ENCODE measurements at regions of chr6 and their contacts with region 1.

Region 1: DNA sequence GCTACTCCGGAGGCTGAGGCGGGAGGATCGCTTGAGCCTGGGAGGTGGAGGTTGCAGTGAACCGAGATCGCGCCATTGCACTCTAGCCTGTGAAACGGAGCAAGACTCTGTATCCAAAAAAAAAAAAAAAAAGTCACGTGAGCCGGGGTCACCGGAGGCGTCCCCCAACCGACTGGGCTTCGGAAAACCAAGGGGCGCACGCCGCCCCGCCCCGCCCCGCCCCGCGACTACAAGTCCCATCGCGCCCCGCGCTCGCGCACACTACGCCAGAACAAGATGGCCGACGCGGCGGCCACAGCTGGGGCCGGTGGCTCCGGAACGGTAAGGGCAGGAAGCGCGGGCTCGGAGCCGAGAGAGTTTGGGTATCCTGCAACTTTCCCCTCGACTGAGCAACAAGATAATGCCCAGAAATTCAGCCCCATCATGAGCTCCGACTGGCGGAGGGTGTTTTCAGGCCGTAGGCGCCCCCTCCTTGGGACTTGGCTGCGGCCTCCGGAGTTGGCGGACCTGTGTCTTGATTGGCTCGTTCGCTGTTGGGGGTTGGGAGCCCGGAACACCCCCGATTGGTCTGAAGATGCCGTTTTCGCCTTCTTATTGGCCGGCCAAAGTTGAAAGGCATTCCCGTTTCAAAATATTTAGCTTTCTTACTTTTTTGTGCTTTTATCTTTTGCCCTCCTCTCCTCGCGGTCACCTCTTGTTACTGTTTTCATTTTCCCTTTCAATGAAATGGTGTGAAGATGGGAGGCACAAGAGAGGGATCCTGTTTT is at the start of gene TAF8:
- DNase-seq: peak; percentile 87 to 92 (median 88)
- H3K4me3 ChIP-seq: peak within 1 kb of the TSS; percentile 89 to 92
- H3K4me3 Mint-ChIP-seq: peak within 1 kb of the TSS; percentile 91 to 98 (median 96)
- H3K27ac ChIP-seq: peak within 1 kb of the TSS; percentile 77
- H3K27ac Mint-ChIP-seq: peak within 1 kb of the TSS; percentile 95 to 98 (median 97)
- H3K4me1 ChIP-seq: peaks cover 61% of the 10 kb centered on the region
- H3K4me1 Mint-ChIP-seq: peaks cover 18 to 78% (median 42%) of the 10 kb centered on the region in 4 donors
- H3K27me3 ChIP-seq: no peaks in the 10 kb centered on the region
- H3K27me3 Mint-ChIP-seq: no peaks in the 10 kb centered on the region
- total RNA-seq, gene TAF8: 39.1 to 40.9 TPM

Region 2: GRCh38 chr6:41548098-41548840 is 502.2 kb before region 1 on chr6:
- CTCF ChIA-PET with region 1: no interaction called
- POLR2A ChIA-PET with region 1: no interaction called
- intact Hi-C with region 1: no loop called
- DNase-seq: peak; percentile 20 to 49 (median 33)
- H3K4me3 ChIP-seq: peak overlapping the region; percentile 75 to 76
- H3K4me3 Mint-ChIP-seq: peak overlapping the region; percentile 90 to 96 (median 92)
- H3K27ac ChIP-seq: peak overlapping the region; percentile 37
- H3K27ac Mint-ChIP-seq: peak overlapping the region in 6 of 7 donors; percentile 47 to 91 (median 82)
- H3K4me1 ChIP-seq: peaks cover 37% of the 10 kb centered on the region
- H3K4me1 Mint-ChIP-seq: peaks cover 11 to 53% (median 34%) of the 10 kb centered on the region in 4 donors
- H3K27me3 ChIP-seq: peaks cover 17% of the 10 kb centered on the region
- H3K27me3 Mint-ChIP-seq: peaks cover 0 to 2% of the 10 kb centered on the region in 2 donors

Region 3: DNA sequence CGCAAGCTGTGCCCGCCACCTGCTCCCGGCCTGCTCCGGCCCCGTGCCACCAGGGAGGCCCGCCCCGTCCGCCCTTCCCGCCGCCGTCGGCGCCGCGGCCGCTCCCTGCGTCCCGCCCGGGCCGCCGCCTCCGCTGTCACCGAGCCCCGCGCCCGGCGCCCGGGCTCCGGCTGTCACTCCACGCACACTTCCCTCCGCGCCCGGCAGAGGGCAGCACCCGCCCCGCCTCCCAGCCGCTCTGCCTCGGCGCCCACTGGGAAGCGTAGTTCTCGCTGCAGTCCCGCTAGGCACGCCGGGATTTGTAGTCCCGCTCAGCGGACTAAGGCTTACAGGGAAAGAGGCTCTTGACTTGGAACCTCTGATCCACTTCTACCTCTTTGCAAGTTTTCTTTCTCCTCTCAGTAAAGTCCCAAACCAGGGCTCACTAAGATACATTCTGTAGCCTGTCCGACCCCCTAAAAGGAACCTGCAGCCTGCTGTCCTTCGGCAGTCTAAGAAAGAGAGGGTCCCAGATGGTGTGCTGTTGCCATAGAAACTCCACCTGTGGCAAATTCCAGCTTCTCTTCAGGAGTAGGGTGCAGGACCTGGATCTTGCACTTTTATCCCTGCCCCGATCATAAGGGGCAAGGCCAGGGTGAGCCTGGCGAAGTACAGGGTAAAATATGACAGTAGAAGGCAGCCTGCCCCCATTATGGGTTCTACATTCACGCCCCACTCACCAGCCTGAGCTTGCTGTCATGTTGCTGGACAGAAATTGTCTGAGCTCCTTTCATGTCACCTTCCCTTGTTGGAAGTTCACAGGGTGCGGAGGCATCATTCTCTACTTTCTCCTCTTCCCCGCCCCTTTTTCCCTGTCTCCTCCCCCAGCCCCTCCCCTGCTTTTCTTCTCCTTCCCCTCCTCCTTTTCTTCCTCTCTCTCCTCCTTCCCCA is 314.8 kb before region 1 on chr6 and contains the start of gene TFEB:
- CTCF ChIA-PET with region 1: interaction called, 9 read pairs
- POLR2A ChIA-PET with region 1: interaction called, 3 read pairs
- intact Hi-C with region 1: loop called (anchors 1 kb)
- DNase-seq: peak; percentile 92 to 95 (median 92)
- H3K4me3 ChIP-seq: peak within 1 kb of the TSS in 1 of 2 donors; percentile 64
- H3K4me3 Mint-ChIP-seq: peak within 1 kb of the TSS; percentile 77 to 91 (median 82)
- H3K27ac ChIP-seq: peak within 1 kb of the TSS; percentile 75
- H3K27ac Mint-ChIP-seq: peak within 1 kb of the TSS; percentile 42 to 93 (median 76)
- H3K4me1 ChIP-seq: peaks cover 38% of the 10 kb centered on the region
- H3K4me1 Mint-ChIP-seq: peaks cover 16 to 35% (median 26%) of the 10 kb centered on the region in 4 donors
- H3K27me3 ChIP-seq: no peaks in the 10 kb centered on the region
- H3K27me3 Mint-ChIP-seq: peaks cover 0 to 1% of the 10 kb centered on the region in 2 donors
- total RNA-seq, gene TFEB: 12.2 to 15.7 TPM

Region 4: DNA sequence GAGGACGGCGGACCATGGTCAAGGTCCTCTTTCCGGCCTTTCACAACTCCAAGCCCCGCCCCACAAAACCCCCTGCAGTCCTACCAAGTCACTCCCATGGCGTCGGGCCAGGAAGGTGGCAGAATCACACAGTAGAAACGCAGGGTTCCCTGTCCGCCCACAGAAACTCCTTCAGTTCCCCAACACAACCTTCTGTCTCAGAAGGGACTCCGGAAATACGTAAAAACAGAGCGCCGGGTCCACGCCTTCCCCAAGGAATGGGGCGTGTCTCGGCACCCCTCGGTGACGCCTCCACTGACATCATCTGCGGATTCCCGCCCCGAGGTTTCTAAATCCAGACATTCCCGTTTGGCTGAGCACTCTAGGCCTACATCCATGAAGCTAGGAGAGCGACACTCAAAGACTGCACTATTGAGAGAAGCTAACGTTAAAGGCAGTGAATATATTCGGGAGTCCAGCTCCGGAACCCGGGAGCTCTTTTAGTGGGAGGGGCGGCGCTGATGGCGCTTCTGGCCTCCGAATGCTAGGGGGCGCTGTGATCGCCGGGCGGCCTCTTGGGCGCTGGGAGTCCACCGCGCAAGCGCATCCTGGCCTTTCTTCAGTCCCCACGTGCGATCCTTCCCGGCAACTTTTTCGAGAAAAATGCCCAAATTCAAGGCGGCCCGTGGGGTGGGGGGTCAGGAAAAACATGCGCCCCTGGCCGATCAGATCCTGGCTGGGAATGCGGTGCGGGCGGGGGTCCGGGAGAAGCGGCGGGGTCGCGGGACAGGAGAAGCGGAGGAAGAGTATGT is 129.3 kb before region 1 on chr6 and contains the starts of genes BYSL and MED20:
- CTCF ChIA-PET with region 1: interaction called, 125 read pairs
- POLR2A ChIA-PET with region 1: interaction called, 95 read pairs
- intact Hi-C with region 1: loop called (anchors 1 kb)
- DNase-seq: peak; percentile 94 to 96 (median 95)
- H3K4me3 ChIP-seq: peak within 1 kb of the TSS; percentile 75 to 99
- H3K4me3 Mint-ChIP-seq: peak within 1 kb of the TSS; percentile 99 to 100 (median 100)
- H3K27ac ChIP-seq: peak within 1 kb of the TSS; percentile 91
- H3K27ac Mint-ChIP-seq: peak within 1 kb of the TSS; percentile 98 to 100 (median 100)
- H3K4me1 ChIP-seq: peaks cover 47% of the 10 kb centered on the region
- H3K4me1 Mint-ChIP-seq: peaks cover 34 to 57% (median 47%) of the 10 kb centered on the region in 4 donors
- H3K27me3 ChIP-seq: no peaks in the 10 kb centered on the region
- H3K27me3 Mint-ChIP-seq: peaks cover 0 to 2% of the 10 kb centered on the region in 2 donors
- total RNA-seq, gene BYSL: 7.1 to 9.2 TPM
- total RNA-seq, gene MED20: 10.0 to 11.5 TPM

Region 5: GRCh38 chr6:41941280-41942066 is 109.0 kb before region 1 on chr6 and contains the start of gene CCND3:
- CTCF ChIA-PET with region 1: interaction called, 169 read pairs
- POLR2A ChIA-PET with region 1: interaction called, 280 read pairs
- intact Hi-C with region 1: no loop called
- DNase-seq: peak; percentile 77 to 86 (median 79)
- H3K4me3 ChIP-seq: peak within 1 kb of the TSS; percentile 75 to 76
- H3K4me3 Mint-ChIP-seq: peak within 1 kb of the TSS; percentile 83 to 99 (median 95)
- H3K27ac ChIP-seq: peak within 1 kb of the TSS; percentile 80
- H3K27ac Mint-ChIP-seq: peak within 1 kb of the TSS; percentile 91 to 96 (median 93)
- H3K4me1 ChIP-seq: peaks cover 77% of the 10 kb centered on the region
- H3K4me1 Mint-ChIP-seq: peaks cover 48 to 80% (median 61%) of the 10 kb centered on the region in 4 donors
- H3K27me3 ChIP-seq: no peaks in the 10 kb centered on the region
- H3K27me3 Mint-ChIP-seq: no peaks in the 10 kb centered on the region
- total RNA-seq, gene CCND3: 223 to 242 TPM

Region 6: GRCh38 chr6:42028234-42029061 is 22.0 kb before region 1 on chr6:
- CTCF ChIA-PET with region 1: interaction called, 36 read pairs
- POLR2A ChIA-PET with region 1: interaction called, 27 read pairs
- intact Hi-C with region 1: no loop called
- DNase-seq: no peak
- H3K4me3 ChIP-seq: no peak overlapping the region
- H3K4me3 Mint-ChIP-seq: peak overlapping the region in 7 of 8 donors; percentile 64 to 81 (median 76)
- H3K27ac ChIP-seq: peak overlapping the region; percentile 62
- H3K27ac Mint-ChIP-seq: peak overlapping the region; percentile 92 to 95 (median 93)
- H3K4me1 ChIP-seq: peaks cover 98% of the 10 kb centered on the region
- H3K4me1 Mint-ChIP-seq: peaks cover 66 to 97% (median 80%) of the 10 kb centered on the region in 4 donors
- H3K27me3 ChIP-seq: no peaks in the 10 kb centered on the region
- H3K27me3 Mint-ChIP-seq: no peaks in the 10 kb centered on the region

Region 7: DNA sequence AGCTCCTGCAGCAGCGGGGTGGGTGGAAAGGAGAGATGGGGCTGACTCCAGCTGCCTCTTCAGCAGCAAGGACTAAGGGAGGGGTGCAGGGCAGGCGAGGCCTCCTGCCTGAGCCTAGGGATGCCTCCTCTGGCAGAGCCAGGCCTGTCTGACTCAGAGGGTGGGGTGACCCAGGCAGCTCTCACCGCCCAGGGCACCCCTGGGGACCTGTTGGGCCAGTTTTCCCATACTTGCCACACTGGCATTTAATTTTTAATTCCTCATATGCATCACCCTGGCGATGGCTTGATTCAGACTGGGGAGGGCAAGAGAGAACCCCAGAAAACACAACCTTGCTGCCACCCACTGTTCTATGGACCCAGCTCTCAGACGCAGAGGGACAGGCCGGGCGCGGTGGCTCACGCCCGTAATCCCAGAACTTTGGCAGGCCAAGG is 72.3 kb after region 1 on chr6:
- CTCF ChIA-PET with region 1: no interaction called
- POLR2A ChIA-PET with region 1: no interaction called
- intact Hi-C with region 1: no loop called
- DNase-seq: no peak
- H3K4me3 ChIP-seq: no peak overlapping the region
- H3K4me3 Mint-ChIP-seq: no peak overlapping the region
- H3K27ac ChIP-seq: no peak overlapping the region
- H3K27ac Mint-ChIP-seq: peak overlapping the region in 1 of 7 donors; percentile 2
- H3K4me1 ChIP-seq: no peaks in the 10 kb centered on the region
- H3K4me1 Mint-ChIP-seq: no peaks in the 10 kb centered on the region
- H3K27me3 ChIP-seq: no peaks in the 10 kb centered on the region
- H3K27me3 Mint-ChIP-seq: no peaks in the 10 kb centered on the region

Region 8: GRCh38 chr6:42563697-42564505 is 513.5 kb after region 1 on chr6 and contains the start of gene UBR2:
- CTCF ChIA-PET with region 1: no interaction called
- POLR2A ChIA-PET with region 1: interaction called, 5 read pairs
- intact Hi-C with region 1: loop called (anchors 2 kb)
- DNase-seq: peak; percentile 92 to 98 (median 95)
- H3K4me3 ChIP-seq: peak within 1 kb of the TSS; percentile 98 to 100
- H3K4me3 Mint-ChIP-seq: peak within 1 kb of the TSS; percentile 92 to 100 (median 98)
- H3K27ac ChIP-seq: peak within 1 kb of the TSS; percentile 94
- H3K27ac Mint-ChIP-seq: peak within 1 kb of the TSS; percentile 90 to 98 (median 96)
- H3K4me1 ChIP-seq: peaks cover 33% of the 10 kb centered on the region
- H3K4me1 Mint-ChIP-seq: peaks cover 21 to 43% (median 28%) of the 10 kb centered on the region in 4 donors
- H3K27me3 ChIP-seq: no peaks in the 10 kb centered on the region
- H3K27me3 Mint-ChIP-seq: peaks cover 0 to 1% of the 10 kb centered on the region in 2 donors
- total RNA-seq, gene UBR2: 55.0 to 55.7 TPM

Measured in CD4-positive, alpha-beta memory T cell (primary cell).